ENCODE measurements at regions of chr1 and their contacts with region 1.

Region 1: GRCh38 chr1:27603681-27604578 is at the start of gene AHDC1:
- DNase-seq: peak; percentile 97
- ATAC-seq: peak; percentile 76
- total RNA-seq, gene AHDC1: 51.2 TPM

Region 2: GRCh38 chr1:27300341-27301051 is 303.4 kb before region 1 on chr1:
- intact Hi-C with region 1: loop called (anchors 1 kb)
- DNase-seq: peak; percentile 92
- ATAC-seq: peak; percentile 85

Region 3: GRCh38 chr1:27402349-27402754 is 201.6 kb before region 1 on chr1:
- intact Hi-C with region 1: loop called (anchors 2 kb)
- DNase-seq: peak; percentile 83
- ATAC-seq: peak; percentile 49

Region 4: GRCh38 chr1:27556781-27557595 is 46.9 kb before region 1 on chr1:
- intact Hi-C with region 1: loop called (anchors 1 kb)
- DNase-seq: peak; percentile 96
- ATAC-seq: peak; percentile 69

Region 5: GRCh38 chr1:27662707-27663393 is 58.9 kb after region 1 on chr1:
- intact Hi-C with region 1: loop called (anchors 1 kb)
- DNase-seq: peak; percentile 80
- ATAC-seq: peak; percentile 72

Measured in Right ventricle myocardium inferior (tissue), 1 donor.